Activated CD8-positive, alpha-beta T cell treated with anti-CD3 and anti-CD28 coated beads for 36 hours (primary cell): ENCODE measurements at regions of chr2 and their contacts with region 1.

Region 1: GRCh38 chr2:26922405-26923188 is 47.8 kb upstream of the MAPRE3 start:
- DNase-seq: peak; percentile 66
- ATAC-seq: peak; percentile 87
- H3K4me3 Mint-ChIP-seq: no peak overlapping the region
- H3K27ac Mint-ChIP-seq: no peak overlapping the region
- H3K4me1 Mint-ChIP-seq: peaks cover 11% of the 10 kb centered on the region
- H3K27me3 Mint-ChIP-seq: peaks cover 8% of the 10 kb centered on the region
- CTCF ChIP-seq: peak; percentile 76

Region 2: DNA sequence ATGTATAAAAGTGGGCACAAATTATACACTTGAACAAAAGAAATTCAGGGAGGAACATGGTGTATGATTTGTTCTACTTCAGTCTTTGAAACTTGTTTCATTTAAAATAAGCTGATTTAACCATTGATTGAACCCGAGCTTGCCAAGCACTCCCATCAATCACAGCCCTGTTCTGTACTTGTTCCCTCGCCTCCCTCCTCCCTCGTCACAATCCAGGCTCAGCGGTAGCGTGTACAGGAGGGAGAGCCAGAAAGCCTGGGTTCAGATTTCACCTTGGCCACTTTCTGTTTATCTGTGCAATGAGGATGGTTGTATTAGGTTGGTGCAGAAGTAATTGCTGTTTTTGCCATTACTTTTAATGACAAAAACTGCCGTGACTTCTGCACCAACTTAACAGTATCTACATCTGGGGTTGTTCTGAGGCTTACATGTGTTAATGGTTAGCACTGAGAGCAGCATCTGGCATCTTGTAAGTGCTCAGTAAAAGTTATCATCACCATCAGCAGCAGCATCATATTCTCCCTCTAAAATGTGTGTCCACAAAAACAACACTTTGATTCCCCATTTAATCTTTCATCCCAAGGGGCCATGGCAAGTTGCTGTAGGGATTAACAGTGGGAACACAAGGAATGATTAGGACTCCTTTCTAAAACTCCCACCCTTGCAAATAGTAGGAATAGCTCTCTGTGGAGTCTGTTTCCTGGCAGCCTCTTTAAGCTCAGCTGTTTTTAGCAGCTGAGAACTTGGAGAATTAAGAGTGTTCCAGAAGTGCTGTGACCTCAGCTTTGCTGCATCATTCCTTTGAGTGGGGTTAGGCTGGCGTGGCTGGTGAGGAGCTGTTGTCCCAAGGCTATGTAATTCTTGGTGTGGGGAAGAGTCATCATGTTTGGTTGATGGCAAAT is 69.9 kb before region 1 on chr2:
- CTCF ChIA-PET with region 1: interaction called, 117 read pairs
- POLR2A ChIA-PET with region 1: no interaction called
- intact Hi-C with region 1: loop called (anchors 5 kb)
- DNase-seq: no peak
- ATAC-seq: no peak
- H3K4me3 Mint-ChIP-seq: no peak overlapping the region
- H3K27ac Mint-ChIP-seq: no peak overlapping the region
- H3K4me1 Mint-ChIP-seq: peaks cover 3% of the 10 kb centered on the region
- H3K27me3 Mint-ChIP-seq: peaks cover 37% of the 10 kb centered on the region
- CTCF ChIP-seq: no peak

Region 3: DNA sequence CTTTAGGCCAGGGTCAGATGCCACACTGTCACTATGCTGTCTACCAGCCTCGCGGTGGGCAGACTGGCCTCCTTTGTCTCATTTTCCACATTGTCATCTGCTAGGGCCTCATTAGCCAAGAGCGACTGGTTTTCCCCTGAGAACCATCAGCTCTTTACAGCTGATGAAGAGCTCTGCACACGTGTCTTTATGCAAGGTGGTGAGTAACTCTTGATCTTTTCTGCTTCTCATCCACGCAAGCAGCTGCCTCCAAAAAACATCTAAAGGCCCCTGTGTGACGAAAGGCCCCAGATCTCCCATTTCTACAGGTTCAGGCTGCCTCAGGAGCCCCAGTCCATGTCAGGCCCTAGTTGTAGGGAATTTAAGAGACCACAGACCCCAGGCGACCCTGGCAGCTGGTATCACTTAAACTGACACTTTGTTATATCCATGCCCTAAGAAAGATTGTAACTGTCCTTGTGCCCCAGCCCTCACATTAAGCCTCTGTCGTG is 21.7 kb before region 1 on chr2:
- CTCF ChIA-PET with region 1: interaction called, 10 read pairs
- POLR2A ChIA-PET with region 1: no interaction called
- intact Hi-C with region 1: no loop called
- DNase-seq: no peak
- ATAC-seq: no peak
- H3K4me3 Mint-ChIP-seq: no peak overlapping the region
- H3K27ac Mint-ChIP-seq: no peak overlapping the region
- H3K4me1 Mint-ChIP-seq: no peaks in the 10 kb centered on the region
- H3K27me3 Mint-ChIP-seq: peaks cover 2% of the 10 kb centered on the region
- CTCF ChIP-seq: no peak

Region 4: DNA sequence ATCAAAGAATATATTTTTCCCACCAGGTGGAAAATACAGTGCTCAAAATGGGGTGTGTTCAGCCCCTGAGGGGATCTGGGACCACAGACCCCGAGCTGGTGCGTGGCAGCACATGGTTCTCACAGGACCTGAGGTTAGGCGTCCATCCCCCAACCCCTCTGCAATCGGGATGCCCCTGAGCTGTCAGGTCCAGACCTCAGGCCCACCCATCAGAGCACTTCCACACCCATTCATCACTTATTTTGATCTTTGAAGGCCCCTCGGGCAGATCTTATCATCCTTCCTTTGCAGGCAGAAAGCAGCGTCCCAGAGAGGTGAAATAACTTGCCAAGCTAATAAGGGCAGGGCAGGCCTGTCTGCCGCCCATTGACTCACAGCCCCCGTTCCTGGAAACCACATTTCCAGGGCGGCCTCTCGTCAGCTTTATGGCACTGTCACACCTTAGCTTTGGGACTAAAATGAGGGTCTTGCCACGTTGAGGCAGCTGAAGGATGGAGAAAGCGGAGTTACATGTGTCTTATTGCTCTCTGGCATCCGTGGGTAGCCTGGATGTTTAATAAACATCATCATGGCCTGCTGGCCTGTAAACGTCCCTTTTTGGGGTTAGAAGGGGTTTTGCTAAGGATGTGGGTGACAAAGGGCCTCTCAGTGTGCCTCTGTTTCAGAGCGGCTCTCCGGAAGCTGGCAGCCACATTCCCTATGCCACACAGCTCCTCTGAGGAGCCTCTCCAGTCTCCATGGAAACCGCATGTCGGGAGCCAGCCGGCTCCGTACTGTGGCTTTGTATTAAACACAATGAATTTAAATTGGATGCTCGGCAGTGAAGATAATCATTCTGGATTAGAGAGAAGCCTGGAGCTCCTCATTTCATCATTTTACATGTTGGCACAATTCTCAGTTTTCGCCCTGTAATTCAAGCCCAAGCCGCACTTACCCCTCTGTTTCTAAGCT is 10.4 kb before region 1 on chr2:
- CTCF ChIA-PET with region 1: interaction called, 22 read pairs
- POLR2A ChIA-PET with region 1: no interaction called
- intact Hi-C with region 1: no loop called
- DNase-seq: no peak
- ATAC-seq: no peak
- H3K4me3 Mint-ChIP-seq: no peak overlapping the region
- H3K27ac Mint-ChIP-seq: no peak overlapping the region
- H3K4me1 Mint-ChIP-seq: no peaks in the 10 kb centered on the region
- H3K27me3 Mint-ChIP-seq: peaks cover 11% of the 10 kb centered on the region
- CTCF ChIP-seq: no peak

Region 5: DNA sequence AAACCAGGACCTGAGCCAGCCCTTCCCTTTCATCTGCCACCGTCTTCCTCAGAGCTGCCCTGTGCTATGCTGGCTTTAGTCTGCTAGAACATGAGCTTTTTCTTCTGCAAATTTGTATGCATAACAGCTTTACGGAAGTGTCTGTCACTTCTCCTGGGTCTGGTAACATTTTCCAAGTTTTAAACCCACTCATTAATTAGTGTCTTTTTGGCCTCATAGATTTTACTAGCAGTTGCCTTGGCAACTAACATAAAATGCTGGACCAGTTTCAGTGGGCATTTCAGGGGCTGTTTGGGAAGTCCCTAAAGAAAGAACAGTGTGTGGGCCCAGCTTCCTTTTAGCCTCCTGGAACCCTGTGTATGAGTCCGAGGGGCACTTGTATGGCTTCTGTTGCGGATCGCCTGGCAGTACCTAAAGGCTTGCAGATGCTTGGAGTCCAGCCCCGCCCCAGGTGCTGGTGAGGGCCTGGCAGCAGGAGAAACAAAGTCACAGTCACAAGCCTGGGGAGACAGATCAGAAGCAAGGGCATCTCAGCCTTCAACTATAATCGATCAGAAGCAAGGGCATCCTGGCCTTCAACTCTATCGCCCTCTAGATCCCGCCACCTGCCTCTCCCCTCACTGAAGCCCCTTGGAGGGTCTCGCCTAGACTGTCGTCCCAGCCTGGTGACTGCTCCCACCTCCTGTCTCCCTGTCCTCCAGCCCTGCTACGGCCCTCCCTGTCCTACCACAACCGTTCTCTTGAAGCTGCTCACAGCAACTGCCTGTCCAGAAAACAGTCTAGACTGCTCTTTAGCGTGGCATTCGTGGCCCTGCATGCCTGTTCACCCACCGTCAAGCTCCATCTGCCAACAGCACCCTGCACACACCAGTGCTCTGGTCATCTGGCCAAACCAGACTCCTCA is 11.1 kb after region 1 on chr2:
- CTCF ChIA-PET with region 1: interaction called, 10 read pairs
- POLR2A ChIA-PET with region 1: no interaction called
- intact Hi-C with region 1: no loop called
- DNase-seq: no peak
- ATAC-seq: no peak
- H3K4me3 Mint-ChIP-seq: no peak overlapping the region
- H3K27ac Mint-ChIP-seq: no peak overlapping the region
- H3K4me1 Mint-ChIP-seq: no peaks in the 10 kb centered on the region
- H3K27me3 Mint-ChIP-seq: no peaks in the 10 kb centered on the region
- CTCF ChIP-seq: no peak

Region 6: GRCh38 chr2:26942543-26943295 is 20.1 kb after region 1 on chr2:
- CTCF ChIA-PET with region 1: interaction called, 34 read pairs
- POLR2A ChIA-PET with region 1: no interaction called
- intact Hi-C with region 1: no loop called
- DNase-seq: peak; percentile 84
- ATAC-seq: peak; percentile 69
- H3K4me3 Mint-ChIP-seq: no peak overlapping the region
- H3K27ac Mint-ChIP-seq: no peak overlapping the region
- H3K4me1 Mint-ChIP-seq: peaks cover 2% of the 10 kb centered on the region
- H3K27me3 Mint-ChIP-seq: peaks cover 5% of the 10 kb centered on the region
- CTCF ChIP-seq: peak; percentile 86

Region 7: GRCh38 chr2:27016801-27017325 is 94.3 kb after region 1 on chr2:
- CTCF ChIA-PET with region 1: interaction called, 10 read pairs
- POLR2A ChIA-PET with region 1: no interaction called
- intact Hi-C with region 1: no loop called
- DNase-seq: peak; percentile 75
- ATAC-seq: peak; percentile 77
- H3K4me3 Mint-ChIP-seq: no peak overlapping the region
- H3K27ac Mint-ChIP-seq: no peak overlapping the region
- H3K4me1 Mint-ChIP-seq: peaks cover 2% of the 10 kb centered on the region
- H3K27me3 Mint-ChIP-seq: no peaks in the 10 kb centered on the region
- CTCF ChIP-seq: peak; percentile 63

Region 8: GRCh38 chr2:27071277-27071989 is 148.8 kb after region 1 on chr2 and contains the start of gene OST4:
- CTCF ChIA-PET with region 1: no interaction called
- POLR2A ChIA-PET with region 1: no interaction called
- intact Hi-C with region 1: no loop called
- DNase-seq: peak; percentile 91
- ATAC-seq: peak; percentile 92
- H3K4me3 Mint-ChIP-seq: peak within 1 kb of the TSS; percentile 98
- H3K27ac Mint-ChIP-seq: peak within 1 kb of the TSS; percentile 95
- H3K4me1 Mint-ChIP-seq: peaks cover 68% of the 10 kb centered on the region
- H3K27me3 Mint-ChIP-seq: no peaks in the 10 kb centered on the region
- CTCF ChIP-seq: no peak
- total RNA-seq, gene OST4: 257 to 262 TPM

Region 9: DNA sequence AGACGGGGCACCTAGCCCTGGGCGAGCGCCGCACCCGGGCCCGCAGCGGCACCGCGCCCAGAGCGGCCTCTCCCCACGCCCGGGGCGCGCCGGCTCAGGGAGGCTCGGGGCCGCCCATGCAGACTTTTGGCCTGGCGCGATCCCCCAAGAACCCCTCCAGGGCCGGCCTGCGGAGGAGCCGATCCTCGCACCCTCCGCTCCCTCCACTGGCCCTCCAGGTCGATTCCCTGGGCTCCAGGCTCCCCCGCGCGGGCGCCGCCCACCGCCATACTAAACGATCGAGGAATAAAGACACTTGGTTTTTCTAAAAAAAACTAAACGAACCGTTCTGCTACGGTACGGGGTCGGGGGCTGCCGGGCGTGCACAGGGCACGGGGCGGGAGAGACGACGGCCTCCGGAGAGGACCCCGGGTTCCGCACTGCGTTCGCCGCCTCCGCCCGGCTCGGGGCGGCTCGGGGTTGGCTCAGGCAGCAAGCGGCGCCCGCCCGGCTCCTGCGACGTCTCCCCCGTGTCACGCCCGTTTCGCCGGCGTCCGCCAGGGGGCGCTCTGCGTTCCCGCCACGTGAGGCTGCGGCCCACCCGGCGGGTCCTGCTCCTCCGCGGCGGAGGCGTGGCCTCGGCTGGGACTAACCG is 163.6 kb after region 1 on chr2:
- CTCF ChIA-PET with region 1: no interaction called
- POLR2A ChIA-PET with region 1: no interaction called
- intact Hi-C with region 1: no loop called
- DNase-seq: peak; percentile 96
- ATAC-seq: peak; percentile 90
- H3K4me3 Mint-ChIP-seq: peak overlapping the region; percentile 82
- H3K27ac Mint-ChIP-seq: peak overlapping the region; percentile 84
- H3K4me1 Mint-ChIP-seq: peaks cover 21% of the 10 kb centered on the region
- H3K27me3 Mint-ChIP-seq: no peaks in the 10 kb centered on the region
- CTCF ChIP-seq: peak; percentile 92

Region 10: DNA sequence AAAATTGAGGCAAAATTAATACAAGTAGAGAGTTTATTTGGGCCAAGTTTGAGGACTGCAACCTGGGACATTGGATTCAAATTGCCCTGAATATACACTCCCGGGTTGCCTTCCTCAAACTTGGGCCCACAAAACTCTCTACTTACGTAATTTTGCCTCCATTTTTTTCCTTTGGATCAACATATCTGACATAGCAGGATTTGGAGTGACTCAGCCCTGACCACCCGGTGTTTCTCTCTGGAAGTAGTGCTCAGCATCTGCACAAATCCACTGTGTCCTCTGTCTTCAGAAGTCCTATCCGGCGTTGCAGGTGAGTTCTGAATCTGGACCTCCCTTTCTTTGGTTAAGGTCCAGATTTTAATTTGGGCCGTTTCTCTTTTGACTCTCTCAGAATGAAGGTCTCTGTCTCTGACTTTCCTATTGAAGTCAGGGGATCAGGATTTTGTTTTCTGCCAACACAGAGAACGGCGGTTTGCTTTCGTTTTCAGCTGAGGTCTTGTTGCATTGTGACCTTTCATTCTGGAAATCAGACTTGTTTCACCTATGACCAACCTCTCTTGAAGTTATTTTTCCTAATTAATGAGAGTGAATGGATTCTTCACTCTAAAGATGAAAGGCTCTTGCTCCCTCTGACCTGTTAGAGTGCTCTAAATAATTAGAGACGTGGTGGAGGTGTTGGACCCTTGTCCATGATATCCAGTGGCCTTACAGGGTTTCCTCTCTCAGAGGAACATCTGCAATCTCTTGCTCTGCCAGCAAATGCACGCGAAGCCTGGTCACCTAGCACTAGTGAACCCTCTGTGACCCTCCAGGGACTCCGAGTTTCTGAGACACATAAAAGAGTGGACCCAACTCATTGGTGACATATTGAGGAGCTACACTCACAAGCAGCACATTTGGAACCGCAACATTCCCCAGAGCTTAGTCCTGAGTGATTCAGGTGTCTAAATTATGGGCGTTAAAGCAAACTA is 239.8 kb after region 1 on chr2:
- CTCF ChIA-PET with region 1: no interaction called
- POLR2A ChIA-PET with region 1: no interaction called
- intact Hi-C with region 1: no loop called
- DNase-seq: no peak
- ATAC-seq: no peak
- H3K4me3 Mint-ChIP-seq: no peak overlapping the region
- H3K27ac Mint-ChIP-seq: no peak overlapping the region
- H3K4me1 Mint-ChIP-seq: peaks cover 4% of the 10 kb centered on the region
- H3K27me3 Mint-ChIP-seq: no peaks in the 10 kb centered on the region
- CTCF ChIP-seq: no peak